A673 (cell line): ENCODE measurements at regions of chr16 and their contacts with region 1.

Region 1: DNA sequence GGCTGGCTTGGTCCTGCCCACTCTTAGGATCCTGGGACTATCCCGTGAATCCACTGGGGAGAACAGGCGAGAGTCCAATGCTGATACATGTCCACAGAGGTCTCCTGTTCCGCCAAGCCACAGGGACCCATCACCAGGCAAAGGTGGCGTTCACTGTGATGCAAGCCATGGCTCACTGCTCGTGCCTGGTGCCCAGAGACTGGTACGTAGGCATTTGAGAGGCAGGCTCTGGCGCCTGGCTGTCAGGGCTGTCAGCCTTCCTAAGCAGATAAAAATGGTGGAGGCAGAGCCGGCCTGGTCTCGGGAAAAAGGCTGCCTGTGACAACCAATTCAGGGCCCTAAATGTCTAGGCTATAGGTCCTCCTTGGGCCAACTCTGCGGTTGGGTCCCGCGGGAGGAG is 2329.0 kb downstream of the TP53TG3F start:
- DNase-seq: no peak
- H3K4me3 ChIP-seq: no peak overlapping the region
- H3K27ac ChIP-seq: no peak overlapping the region
- H3K4me1 ChIP-seq: no peaks in the 10 kb centered on the region
- H3K27me3 ChIP-seq: no peaks in the 10 kb centered on the region
- CTCF ChIP-seq: no peak

Region 2: DNA sequence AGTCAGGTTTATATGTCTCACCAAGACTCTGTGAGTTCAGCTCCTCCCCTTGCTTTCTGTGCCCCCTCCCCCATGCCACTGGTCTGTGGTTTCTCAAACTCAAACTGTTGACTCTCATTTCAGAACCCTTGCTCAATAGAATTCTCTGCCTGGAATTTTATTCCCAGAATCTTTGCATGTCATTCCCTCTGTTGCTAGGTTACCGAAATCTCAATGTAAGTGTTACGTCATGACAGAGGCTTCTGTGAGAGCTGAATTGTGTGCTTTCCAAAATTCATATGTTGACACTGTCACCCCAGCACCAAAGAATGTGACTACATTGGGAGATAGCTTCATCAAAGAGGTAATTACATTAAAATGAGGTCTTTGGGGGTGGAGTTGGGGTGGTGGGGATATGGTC is 390.2 kb before region 1 on chr16:
- CTCF ChIA-PET with region 1: no interaction called
- POLR2A ChIA-PET with region 1: no interaction called
- intact Hi-C with region 1: no loop called
- DNase-seq: no peak
- H3K4me3 ChIP-seq: no peak overlapping the region
- H3K27ac ChIP-seq: no peak overlapping the region
- H3K4me1 ChIP-seq: no peaks in the 10 kb centered on the region
- H3K27me3 ChIP-seq: no peaks in the 10 kb centered on the region
- CTCF ChIP-seq: no peak

Region 3: DNA sequence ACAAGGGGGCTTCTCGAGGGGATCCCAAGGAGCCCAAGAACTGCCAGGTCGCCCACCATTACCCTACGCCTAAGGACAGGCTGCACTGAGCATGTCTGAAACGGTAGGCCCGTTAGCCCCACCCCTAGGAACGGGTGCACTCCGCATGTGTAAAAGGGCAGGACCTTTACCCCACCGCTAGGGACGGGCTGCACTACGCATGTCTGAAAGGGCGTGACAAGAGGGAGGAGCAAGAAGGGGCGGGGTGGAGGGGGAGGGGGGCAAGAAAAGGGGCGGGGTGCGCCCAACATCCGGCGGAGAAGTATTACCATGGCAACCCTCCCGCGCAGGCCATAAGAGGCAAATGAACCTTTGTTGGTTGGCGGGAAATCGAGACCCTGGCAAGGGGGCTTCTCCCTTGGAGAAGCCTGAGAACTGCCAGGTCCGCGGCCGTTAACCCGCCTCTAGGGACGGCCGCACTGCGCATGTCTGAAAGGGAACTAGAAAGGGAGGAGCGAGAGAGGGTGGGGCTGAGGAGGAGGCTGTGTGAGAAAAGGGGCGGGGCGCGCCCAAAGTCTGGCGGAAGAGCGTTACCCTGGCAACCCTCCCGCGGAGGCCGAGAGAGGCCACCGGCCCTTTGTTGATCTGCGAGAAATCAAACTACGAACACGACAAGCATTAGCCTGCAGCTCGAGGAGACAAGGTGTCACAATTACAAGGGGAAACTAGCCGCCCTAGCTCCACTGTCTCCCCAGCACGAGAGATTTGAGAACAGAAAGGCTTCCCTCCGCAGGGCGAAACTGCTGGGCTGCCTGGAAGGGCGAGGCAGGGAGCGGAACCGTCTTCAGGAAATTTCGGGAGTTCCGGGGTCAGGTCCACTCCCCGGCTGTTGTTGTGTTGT is 282.1 kb before region 1 on chr16:
- CTCF ChIA-PET with region 1: no interaction called
- POLR2A ChIA-PET with region 1: no interaction called
- intact Hi-C with region 1: loop called (anchors 10 kb)
- DNase-seq: no peak
- H3K4me3 ChIP-seq: no peak overlapping the region
- H3K27ac ChIP-seq: no peak overlapping the region
- H3K4me1 ChIP-seq: no peaks in the 10 kb centered on the region
- H3K27me3 ChIP-seq: no peaks in the 10 kb centered on the region
- CTCF ChIP-seq: no peak

Region 4: GRCh38 chr16:35552763-35553162 is 235.6 kb before region 1 on chr16:
- CTCF ChIA-PET with region 1: no interaction called
- POLR2A ChIA-PET with region 1: no interaction called
- intact Hi-C with region 1: no loop called
- DNase-seq: no peak
- H3K4me3 ChIP-seq: no peak overlapping the region
- H3K27ac ChIP-seq: no peak overlapping the region
- H3K4me1 ChIP-seq: no peaks in the 10 kb centered on the region
- H3K27me3 ChIP-seq: no peaks in the 10 kb centered on the region
- CTCF ChIP-seq: no peak

Region 5: GRCh38 chr16:35690413-35690812 is 98.0 kb before region 1 on chr16:
- CTCF ChIA-PET with region 1: no interaction called
- POLR2A ChIA-PET with region 1: no interaction called
- intact Hi-C with region 1: no loop called
- DNase-seq: no peak
- H3K4me3 ChIP-seq: no peak overlapping the region
- H3K27ac ChIP-seq: no peak overlapping the region
- H3K4me1 ChIP-seq: no peaks in the 10 kb centered on the region
- H3K27me3 ChIP-seq: no peaks in the 10 kb centered on the region
- CTCF ChIP-seq: no peak

Region 6: GRCh38 chr16:35733971-35734702 is 54.2 kb before region 1 on chr16:
- CTCF ChIA-PET with region 1: no interaction called
- POLR2A ChIA-PET with region 1: no interaction called
- intact Hi-C with region 1: no loop called
- DNase-seq: no peak
- H3K4me3 ChIP-seq: no peak overlapping the region
- H3K27ac ChIP-seq: no peak overlapping the region
- H3K4me1 ChIP-seq: no peaks in the 10 kb centered on the region
- H3K27me3 ChIP-seq: no peaks in the 10 kb centered on the region
- CTCF ChIP-seq: no peak

Region 7: GRCh38 chr16:35841632-35842031 is 53.3 kb after region 1 on chr16:
- CTCF ChIA-PET with region 1: no interaction called
- POLR2A ChIA-PET with region 1: no interaction called
- intact Hi-C with region 1: loop called (anchors 10 kb)
- DNase-seq: no peak
- H3K4me3 ChIP-seq: no peak overlapping the region
- H3K27ac ChIP-seq: no peak overlapping the region
- H3K4me1 ChIP-seq: no peaks in the 10 kb centered on the region
- H3K27me3 ChIP-seq: no peaks in the 10 kb centered on the region
- CTCF ChIP-seq: no peak